MCF 10A (cell line): ENCODE measurements at regions of chr4 and their contacts with region 1.

Region 1: GRCh38 chr4:145180298-145181090 is at the start of gene OTUD4:
- DNase-seq: peak; percentile 92
- H3K4me3 Mint-ChIP-seq: peak within 1 kb of the TSS; percentile 73
- H3K27ac Mint-ChIP-seq: peak within 1 kb of the TSS; percentile 85
- H3K4me1 Mint-ChIP-seq: peaks cover 9% of the 10 kb centered on the region
- H3K27me3 Mint-ChIP-seq: no peaks in the 10 kb centered on the region
- CTCF ChIP-seq: no peak
- total RNA-seq, gene OTUD4: 66.2 and 68.0 TPM in 2 replicates

Region 2: GRCh38 chr4:145153181-145153903 is 27.2 kb before region 1 on chr4:
- CTCF ChIA-PET with region 1: interaction called, 3 read pairs
- POLR2A ChIA-PET with region 1: interaction called, 11 read pairs
- intact Hi-C with region 1: no loop called
- DNase-seq: no peak
- H3K4me3 Mint-ChIP-seq: no peak overlapping the region
- H3K27ac Mint-ChIP-seq: no peak overlapping the region
- H3K4me1 Mint-ChIP-seq: no peaks in the 10 kb centered on the region
- H3K27me3 Mint-ChIP-seq: no peaks in the 10 kb centered on the region
- CTCF ChIP-seq: no peak

Region 3: GRCh38 chr4:145170223-145170622 is 10.3 kb before region 1 on chr4:
- CTCF ChIA-PET with region 1: interaction called, 3 read pairs
- POLR2A ChIA-PET with region 1: interaction called, 11 read pairs
- intact Hi-C with region 1: no loop called
- DNase-seq: no peak
- H3K4me3 Mint-ChIP-seq: no peak overlapping the region
- H3K27ac Mint-ChIP-seq: peak overlapping the region; percentile 4
- H3K4me1 Mint-ChIP-seq: peaks cover 22% of the 10 kb centered on the region
- H3K27me3 Mint-ChIP-seq: no peaks in the 10 kb centered on the region
- CTCF ChIP-seq: no peak

Region 4: GRCh38 chr4:145260091-145260490 is 79.6 kb after region 1 on chr4:
- CTCF ChIA-PET with region 1: no interaction called
- POLR2A ChIA-PET with region 1: no interaction called
- intact Hi-C with region 1: no loop called
- DNase-seq: no peak
- H3K4me3 Mint-ChIP-seq: no peak overlapping the region
- H3K27ac Mint-ChIP-seq: no peak overlapping the region
- H3K4me1 Mint-ChIP-seq: no peaks in the 10 kb centered on the region
- H3K27me3 Mint-ChIP-seq: no peaks in the 10 kb centered on the region
- CTCF ChIP-seq: no peak